Left cardiac atrium (tissue), 4 donors: ENCODE measurements at regions of chr4 and their contacts with region 1.

Region 1: GRCh38 chr4:121696581-121697461 is at the start of gene ANXA5:
- DNase-seq: peak; percentile 92
- ATAC-seq: peak; percentile 97 to 98
- total RNA-seq, gene ANXA5: 243 to 278 TPM

Region 2: DNA sequence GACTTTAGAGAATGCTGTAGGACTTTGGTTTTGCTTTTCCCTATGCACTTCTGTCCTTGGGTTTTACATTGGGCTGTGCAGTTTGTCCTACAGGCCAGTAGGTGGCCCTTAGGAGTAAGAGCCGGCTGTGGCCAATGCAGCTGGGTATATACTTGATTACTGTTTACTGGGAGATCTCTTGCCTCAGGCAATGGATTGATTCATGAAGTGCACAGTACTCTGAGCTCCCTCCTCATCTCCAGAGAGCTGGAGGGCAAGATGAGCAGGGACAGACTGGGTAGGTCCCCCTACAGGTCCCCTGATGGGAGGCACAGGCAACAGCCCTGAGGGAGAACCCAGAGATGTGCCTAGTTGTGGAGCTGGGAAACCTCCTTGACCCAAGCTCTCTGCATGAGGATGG is 212.2 kb before region 1 on chr4:
- intact Hi-C with region 1: no loop called
- DNase-seq: peak; percentile 40
- ATAC-seq: peak; percentile 57 to 72

Region 3: GRCh38 chr4:121800961-121801714 is 104.3 kb after region 1 on chr4 and contains the start of gene EXOSC9:
- intact Hi-C with region 1: loop called in 1 of 2 experiments (anchors 5 kb)
- DNase-seq: peak; percentile 94
- ATAC-seq: peak; percentile 97 to 98
- total RNA-seq, gene EXOSC9: 11.0 to 15.1 TPM